HepG2 (cell line): ENCODE measurements at regions of chr15 and their contacts with region 1.

Region 1: GRCh38 chr15:60735559-60736047 is 256.7 kb upstream of the ICE2 start:
- DNase-seq: peak; percentile 96
- ATAC-seq: peak; percentile 89
- H3K4me3 ChIP-seq: no peak overlapping the region; a peak in 1 of 6 replicates
- H3K27ac ChIP-seq: peak overlapping the region; percentile 87
- H3K4me1 ChIP-seq: peaks cover 69% of the 10 kb centered on the region
- H3K27me3 ChIP-seq: no peaks in the 10 kb centered on the region
- CTCF ChIP-seq: no peak
- EP300 ChIP-seq: peak; percentile 41 to 94; a peak in 3 of 4 replicates
- POLR2A ChIP-seq: no peak
- RAD21 ChIP-seq: no peak

Region 2: GRCh38 chr15:60660290-60661051 is 75.1 kb before region 1 on chr15:
- CTCF ChIA-PET with region 1: no interaction called
- POLR2A ChIA-PET with region 1: no interaction called
- in situ Hi-C with region 1: no loop called
- intact Hi-C with region 1: no loop called
- DNase-seq: no peak
- ATAC-seq: no peak
- H3K4me3 ChIP-seq: no peak overlapping the region
- H3K27ac ChIP-seq: no peak overlapping the region
- H3K4me1 ChIP-seq: no peaks in the 10 kb centered on the region
- H3K27me3 ChIP-seq: peaks cover 0 to 9% of the 10 kb centered on the region in 2 experiments; a peak in 2 of 5 replicates
- CTCF ChIP-seq: no peak
- EP300 ChIP-seq: no peak
- POLR2A ChIP-seq: no peak
- RAD21 ChIP-seq: no peak

Region 3: DNA sequence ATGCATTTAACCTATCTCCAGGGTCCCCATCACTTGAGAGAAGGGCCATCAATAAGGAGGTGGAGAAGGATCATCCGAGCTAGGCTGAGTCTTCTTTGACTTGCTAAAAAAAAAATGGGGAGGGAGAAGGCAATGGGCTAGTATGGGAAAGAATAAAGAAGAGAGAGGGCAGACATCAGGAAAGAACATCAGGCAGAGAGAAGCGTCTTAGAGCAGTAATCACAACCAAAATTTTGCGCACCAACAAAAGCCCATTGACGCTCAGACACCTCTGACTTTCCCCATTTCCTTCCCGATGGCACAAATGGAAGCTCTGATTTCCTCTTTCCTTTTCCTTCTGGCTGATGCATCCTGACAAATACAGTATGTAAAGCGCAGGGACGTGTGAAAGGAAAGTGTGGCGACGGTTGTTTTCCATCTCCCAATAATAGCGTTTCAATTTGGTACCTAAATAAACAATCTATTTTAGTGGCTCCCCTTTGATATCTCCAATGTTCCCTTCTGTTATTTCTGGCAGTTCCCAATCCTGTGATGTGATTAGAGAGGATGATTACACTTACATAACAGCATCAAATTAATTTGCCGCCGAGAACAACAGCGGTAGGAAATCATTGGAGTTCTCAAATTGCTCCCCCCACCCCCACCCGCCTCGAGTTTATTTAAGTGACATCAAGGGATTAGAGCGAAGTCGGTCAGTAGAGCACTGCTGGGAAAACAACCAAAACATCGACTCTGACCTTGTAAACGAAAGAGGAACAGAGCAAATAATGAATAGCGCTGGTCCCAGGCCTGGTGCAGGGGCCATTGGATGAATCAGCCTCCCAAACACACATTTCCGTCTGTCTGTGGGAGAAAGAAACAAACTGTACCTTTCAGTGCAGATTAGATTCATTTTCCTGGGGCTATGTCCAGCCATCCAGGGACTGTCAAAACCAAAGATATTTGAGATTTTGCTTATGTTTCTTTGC is 16.7 kb after region 1 on chr15:
- CTCF ChIA-PET with region 1: no interaction called
- POLR2A ChIA-PET with region 1: interaction called, 4 read pairs
- in situ Hi-C with region 1: no loop called
- intact Hi-C with region 1: loop called (anchors 1 kb)
- DNase-seq: peak; percentile 96
- ATAC-seq: peak; percentile 99
- H3K4me3 ChIP-seq: peak overlapping the region in 1 of 3 experiments; percentile 15; a peak in 2 of 6 replicates
- H3K27ac ChIP-seq: peak overlapping the region; percentile 93
- H3K4me1 ChIP-seq: peaks cover 76% of the 10 kb centered on the region
- H3K27me3 ChIP-seq: no peaks in the 10 kb centered on the region
- CTCF ChIP-seq: no peak
- EP300 ChIP-seq: peak in 1 of 2 experiments; percentile 93; a peak in 2 of 4 replicates
- POLR2A ChIP-seq: peak in 1 of 2 experiments; percentile 45; a peak in 1 of 4 replicates
- RAD21 ChIP-seq: no peak